ENCODE measurements at regions of chr3 and their contacts with region 1.

Region 1: GRCh38 chr3:159804726-159805410 is 183.8 kb upstream of the IL12A start:
- DNase-seq: peak; percentile 73
- H3K4me3 ChIP-seq: no peak overlapping the region
- H3K27ac ChIP-seq: peak overlapping the region; percentile 42 to 73 (median 62)
- H3K4me1 ChIP-seq: peaks cover 0 to 25% (median 7%) of the 10 kb centered on the region in 4 donors
- H3K27me3 ChIP-seq: no peaks in the 10 kb centered on the region
- CTCF ChIP-seq: peak; percentile 76 to 88 (median 82)
- EP300 ChIP-seq: no peak
- POLR2A ChIP-seq: no peak

Region 2: GRCh38 chr3:158845765-158846350 is 959.0 kb before region 1 on chr3:
- in situ Hi-C with region 1: loop called in 1 of 4 experiments (anchors 25 kb)
- intact Hi-C with region 1: no loop called
- DNase-seq: no peak
- H3K4me3 ChIP-seq: no peak overlapping the region
- H3K27ac ChIP-seq: no peak overlapping the region
- H3K4me1 ChIP-seq: no peaks in the 10 kb centered on the region
- H3K27me3 ChIP-seq: no peaks in the 10 kb centered on the region
- CTCF ChIP-seq: peak; percentile 65 to 74 (median 68)
- EP300 ChIP-seq: no peak
- POLR2A ChIP-seq: no peak

Region 3: DNA sequence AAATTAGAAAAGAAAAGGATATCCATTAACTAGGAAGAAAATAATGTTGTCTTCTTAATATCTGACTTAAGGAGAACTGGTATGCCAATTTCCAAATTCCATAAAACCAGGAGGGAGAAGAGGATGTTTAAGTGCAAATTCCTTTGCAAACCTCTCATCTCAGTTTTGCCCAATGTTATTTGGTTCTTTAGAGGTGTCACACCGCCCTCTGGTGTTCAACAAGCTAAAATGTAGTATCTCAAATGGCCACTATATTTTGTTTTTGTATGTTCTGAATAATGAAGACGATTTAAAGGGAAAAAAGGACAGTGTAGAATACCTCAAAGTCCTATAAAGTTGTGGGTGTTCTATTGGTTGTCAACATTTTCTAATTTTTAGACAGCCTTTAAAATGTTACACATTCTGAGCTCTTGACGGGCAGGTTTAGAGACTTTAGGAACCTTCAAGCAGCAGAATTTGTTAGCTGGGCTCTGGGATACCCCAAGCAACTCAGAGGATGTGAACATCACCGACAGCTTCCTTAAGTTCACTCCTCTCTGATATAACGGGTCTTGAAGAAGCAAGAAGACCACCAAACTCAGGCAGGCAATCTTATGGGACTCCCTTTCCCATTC is 544.7 kb before region 1 on chr3:
- in situ Hi-C with region 1: loop called in 3 of 4 experiments (anchors 25 kb)
- intact Hi-C with region 1: no loop called
- DNase-seq: peak; percentile 25
- H3K4me3 ChIP-seq: no peak overlapping the region
- H3K27ac ChIP-seq: no peak overlapping the region
- H3K4me1 ChIP-seq: no peaks in the 10 kb centered on the region
- H3K27me3 ChIP-seq: no peaks in the 10 kb centered on the region
- CTCF ChIP-seq: peak; percentile 66 to 76 (median 70)
- EP300 ChIP-seq: no peak
- POLR2A ChIP-seq: no peak

Region 4: GRCh38 chr3:159616212-159616825 is 188.5 kb before region 1 on chr3:
- in situ Hi-C with region 1: loop called in 3 of 4 experiments (anchors 5 to 10 kb)
- intact Hi-C with region 1: loop called (anchors 1 kb)
- DNase-seq: peak; percentile 55
- H3K4me3 ChIP-seq: no peak overlapping the region
- H3K27ac ChIP-seq: no peak overlapping the region
- H3K4me1 ChIP-seq: peaks cover 0 to 7% (median 3%) of the 10 kb centered on the region in 4 donors
- H3K27me3 ChIP-seq: no peaks in the 10 kb centered on the region
- CTCF ChIP-seq: peak; percentile 51 to 80 (median 61)
- EP300 ChIP-seq: no peak
- POLR2A ChIP-seq: no peak

Region 5: GRCh38 chr3:159763602-159764489 is 41.0 kb before region 1 on chr3:
- in situ Hi-C with region 1: no loop called
- intact Hi-C with region 1: loop called (anchors 5 kb)
- DNase-seq: peak; percentile 81
- H3K4me3 ChIP-seq: peak overlapping the region; percentile 50 to 69 (median 62)
- H3K27ac ChIP-seq: peak overlapping the region; percentile 92 to 95 (median 94)
- H3K4me1 ChIP-seq: peaks cover 0 to 35% (median 14%) of the 10 kb centered on the region in 4 donors
- H3K27me3 ChIP-seq: peaks cover 5% of the 10 kb centered on the region
- CTCF ChIP-seq: peak; percentile 30 to 81 (median 44)
- EP300 ChIP-seq: peak; percentile 13
- POLR2A ChIP-seq: peak; percentile 44